Esophagus muscularis mucosa (tissue), 4 donors: ENCODE measurements at regions of chr5 and their contacts with region 1.

Region 1: GRCh38 chr5:171418316-171418981 is 998 bp upstream of the FGF18 start:
- DNase-seq: peak; percentile 95
- H3K4me3 ChIP-seq: peak overlapping the region; percentile 45 to 62 (median 52)
- H3K27ac ChIP-seq: peak overlapping the region in 1 of 4 donors; percentile 26
- H3K4me1 ChIP-seq: peaks cover 27 to 37% (median 34%) of the 10 kb centered on the region in 4 donors
- H3K27me3 ChIP-seq: peaks cover 0 to 31% (median 0%) of the 10 kb centered on the region in 4 donors
- CTCF ChIP-seq: peak; percentile 88 to 99 (median 89)
- EP300 ChIP-seq: no peak
- POLR2A ChIP-seq: no peak

Region 2: DNA sequence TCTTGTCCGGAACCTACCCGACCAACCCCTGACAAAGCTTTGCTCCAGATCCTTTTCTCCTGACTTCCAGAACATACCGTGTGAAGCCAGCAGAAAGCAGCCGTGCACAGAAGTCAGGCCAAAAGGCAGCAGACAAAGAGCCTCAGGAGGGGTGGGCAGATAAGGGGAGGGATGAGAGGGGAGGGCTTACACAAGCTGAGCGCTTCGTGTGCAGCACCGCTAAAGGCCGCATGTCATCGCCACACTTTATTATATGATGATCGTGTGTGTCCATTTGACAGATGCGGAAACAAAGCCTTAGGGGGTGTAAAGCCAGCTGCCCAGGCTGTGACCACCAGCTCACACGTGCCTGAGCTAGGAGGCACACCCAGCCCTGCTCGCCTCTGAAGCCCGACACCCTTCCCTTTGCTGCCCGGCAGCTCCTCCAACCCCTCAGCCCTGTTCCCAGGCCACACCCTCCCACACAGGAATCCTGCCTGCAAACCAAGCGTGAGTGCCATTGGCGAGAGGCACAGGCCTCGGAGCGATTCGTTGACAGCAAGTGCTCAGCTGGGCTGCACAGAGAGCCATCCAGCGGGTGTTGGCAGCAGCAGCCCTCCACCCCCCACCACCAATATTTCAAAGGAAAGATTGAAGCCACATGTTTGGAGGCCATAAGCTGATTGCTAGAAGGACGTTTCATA is 196.7 kb after region 1 on chr5:
- intact Hi-C with region 1: loop called (anchors 10 kb)
- DNase-seq: no peak
- H3K4me3 ChIP-seq: no peak overlapping the region
- H3K27ac ChIP-seq: no peak overlapping the region
- H3K4me1 ChIP-seq: no peaks in the 10 kb centered on the region
- H3K27me3 ChIP-seq: peaks cover 0 to 78% (median 0%) of the 10 kb centered on the region in 4 donors
- CTCF ChIP-seq: no peak
- EP300 ChIP-seq: no peak
- POLR2A ChIP-seq: no peak

Region 3: DNA sequence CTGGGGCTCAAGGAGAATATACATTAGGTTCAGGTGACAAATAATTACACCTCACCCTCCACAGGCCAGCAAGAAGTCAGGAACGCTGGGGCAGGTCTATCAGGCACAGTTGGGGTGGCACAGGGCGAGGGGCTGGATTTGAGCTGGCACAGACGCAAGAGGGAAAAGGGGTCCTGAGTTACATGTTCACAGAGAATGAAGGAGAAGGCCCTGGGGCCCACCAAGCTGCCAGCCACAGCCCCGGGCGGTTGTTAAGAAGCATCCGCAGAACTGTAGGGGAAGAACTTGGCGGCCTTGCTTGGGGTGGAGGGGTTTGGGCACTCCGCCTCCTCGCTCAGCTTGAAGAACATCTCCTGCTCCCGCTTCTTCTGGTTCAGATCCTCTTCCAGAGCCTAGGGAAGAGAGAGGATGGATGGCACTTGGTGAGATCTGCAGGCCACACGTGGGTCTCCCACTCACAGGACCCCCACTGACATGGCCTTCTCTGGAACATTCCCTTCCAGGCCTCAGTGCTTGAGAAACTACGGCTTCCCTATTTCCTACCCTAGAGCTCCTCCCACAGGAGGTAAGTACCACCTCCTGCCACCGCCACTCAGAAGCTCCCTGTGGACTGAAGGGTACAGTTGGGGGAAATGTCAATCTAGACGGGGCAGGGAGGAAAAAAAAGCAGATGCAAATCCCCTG is 626.3 kb after region 1 on chr5:
- intact Hi-C with region 1: loop called (anchors 5 kb)
- DNase-seq: no peak
- H3K4me3 ChIP-seq: no peak overlapping the region
- H3K27ac ChIP-seq: no peak overlapping the region
- H3K4me1 ChIP-seq: peaks cover 0 to 8% (median 3%) of the 10 kb centered on the region in 4 donors
- H3K27me3 ChIP-seq: no peaks in the 10 kb centered on the region
- CTCF ChIP-seq: no peak
- EP300 ChIP-seq: no peak
- POLR2A ChIP-seq: no peak